GM13976 (cell line): ENCODE measurements at regions of chr3 and their contacts with region 1.

Region 1: GRCh38 chr3:56711344-56711743 is 28.3 kb upstream of the TASOR start:
- DNase-seq: no peak
- CTCF ChIP-seq: no peak

Region 2: DNA sequence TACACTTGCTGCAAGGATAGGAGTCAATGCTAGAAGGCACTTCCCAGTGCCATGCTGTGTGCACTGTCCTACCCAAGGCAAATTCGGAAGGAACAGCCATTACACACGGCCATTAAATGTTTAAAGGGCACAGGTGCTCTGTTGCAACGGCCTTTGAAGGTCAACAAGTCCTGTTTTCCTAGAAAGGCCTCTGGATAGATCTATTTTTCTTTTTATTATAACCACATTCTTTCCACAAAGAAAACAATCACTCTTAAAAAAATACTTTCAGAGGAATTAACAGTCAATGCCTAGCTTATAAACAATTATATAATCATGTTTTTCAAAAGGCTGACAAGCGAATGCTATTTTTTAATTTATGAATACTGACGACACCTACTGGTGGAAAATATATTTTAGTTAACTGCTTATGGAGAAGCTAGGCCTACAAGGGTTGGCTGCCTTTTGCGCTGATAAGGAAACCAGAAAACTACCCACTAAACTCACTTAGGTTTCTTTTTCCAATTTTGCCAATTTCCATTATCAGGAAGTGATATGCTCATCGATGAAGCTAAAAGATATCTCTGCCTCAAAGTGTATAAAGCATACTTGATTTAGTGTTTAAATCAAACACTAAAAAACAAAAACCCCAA is 88.0 kb after region 1 on chr3:
- in situ Hi-C with region 1: loop called (anchors 5 kb)
- DNase-seq: peak; percentile 48
- CTCF ChIP-seq: peak; percentile 56